ENCODE measurements at regions of chr1 and their contacts with region 1.

Region 1: GRCh38 chr1:59699227-59699847 is 115.4 kb upstream of the HOOK1 start:
- DNase-seq: no peak
- H3K4me3 ChIP-seq: no peak overlapping the region
- H3K27ac ChIP-seq: peak overlapping the region in 1 of 2 donors; percentile 12
- H3K4me1 ChIP-seq: no peaks in the 10 kb centered on the region
- H3K27me3 ChIP-seq: no peaks in the 10 kb centered on the region
- CTCF ChIP-seq: peak; percentile 94 to 96 (median 95)
- POLR2A ChIP-seq: no peak

Region 2: GRCh38 chr1:59498640-59499039 is 200.7 kb before region 1 on chr1:
- intact Hi-C with region 1: loop called (anchors 5 kb)
- DNase-seq: no peak
- H3K4me3 ChIP-seq: no peak overlapping the region
- H3K27ac ChIP-seq: peak overlapping the region; percentile 30 to 42
- H3K4me1 ChIP-seq: peaks cover 0 to 11% of the 10 kb centered on the region in 2 donors
- H3K27me3 ChIP-seq: no peaks in the 10 kb centered on the region
- CTCF ChIP-seq: no peak
- POLR2A ChIP-seq: no peak

Region 3: DNA sequence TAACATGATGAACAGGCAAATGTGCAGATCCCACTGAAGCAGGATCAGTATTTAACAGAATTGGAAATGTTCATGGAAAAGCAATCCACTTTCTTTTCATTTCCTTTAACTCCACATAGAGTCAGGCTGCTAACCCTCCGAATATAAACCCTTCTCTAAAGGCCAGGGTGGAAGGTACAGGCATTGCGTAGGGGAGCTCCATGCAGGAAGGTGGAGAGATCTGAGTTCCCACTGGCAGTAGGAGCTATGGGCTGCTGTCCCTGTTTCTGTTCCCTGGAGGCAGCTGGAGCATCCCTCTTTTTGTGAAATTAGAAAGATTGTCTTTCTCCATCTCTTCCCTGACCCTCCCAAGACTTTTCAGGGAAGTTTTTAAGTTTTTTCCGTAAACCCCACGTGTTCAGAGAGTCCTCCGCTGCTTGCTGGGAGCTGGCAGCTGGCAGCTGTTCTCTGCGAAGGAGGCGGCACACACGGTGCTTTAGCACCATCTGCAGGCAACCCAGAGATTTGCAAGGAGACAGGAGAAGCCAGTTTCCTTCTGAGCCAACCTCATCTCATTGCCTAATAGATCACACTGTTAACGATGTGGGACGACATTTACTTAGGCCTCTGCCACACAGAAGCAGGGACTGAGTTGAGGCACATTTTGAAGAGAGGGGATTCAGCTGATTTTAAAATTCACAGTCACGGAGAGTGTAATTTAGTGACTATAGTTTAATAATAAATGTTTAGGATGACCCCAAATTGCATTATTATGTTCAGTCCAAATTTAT is 60.0 kb after region 1 on chr1:
- intact Hi-C with region 1: no loop called
- DNase-seq: peak; percentile 73 to 80
- H3K4me3 ChIP-seq: peak overlapping the region in 2 of 3 donors; percentile 28 to 48
- H3K27ac ChIP-seq: peak overlapping the region; percentile 67 to 79
- H3K4me1 ChIP-seq: peaks cover 0 to 6% of the 10 kb centered on the region in 2 donors
- H3K27me3 ChIP-seq: no peaks in the 10 kb centered on the region
- CTCF ChIP-seq: peak; percentile 79 to 99 (median 94)
- POLR2A ChIP-seq: no peak

Measured in breast epithelium (tissue), 4 donors.